Sigmoid colon (tissue), 7 donors: ENCODE measurements at regions of chr9 and their contacts with region 1.

Region 1: DNA sequence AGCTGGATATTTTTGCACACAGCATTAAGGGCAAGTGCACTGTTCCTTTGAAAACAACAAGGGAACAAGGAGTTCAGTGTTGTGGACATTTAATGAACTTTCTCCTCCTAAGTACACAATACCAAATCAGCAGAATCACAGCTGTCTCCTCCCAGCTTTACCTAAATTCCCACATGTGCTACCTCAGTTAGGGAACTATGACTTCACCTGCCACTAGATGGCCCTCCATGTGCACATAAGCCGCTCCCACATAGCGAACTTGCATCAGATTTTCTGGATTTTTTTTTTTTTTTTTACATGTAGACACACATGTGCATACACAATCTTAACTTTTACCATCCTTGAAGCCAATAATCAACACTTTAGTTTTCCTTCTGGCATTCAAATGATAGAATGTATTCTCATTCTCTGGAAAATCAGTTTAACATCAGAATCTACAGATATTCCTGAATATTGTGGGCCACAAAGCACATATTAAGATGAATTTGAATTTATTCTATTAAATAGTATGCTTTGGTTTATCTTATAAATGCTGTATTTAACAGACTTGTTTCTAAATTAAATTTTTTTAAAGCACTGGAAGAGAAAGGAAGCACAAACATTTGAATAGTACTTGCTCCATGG is 123.6 kb downstream of the PALM2AKAP2 start:
- DNase-seq: peak; percentile 77
- H3K4me3 ChIP-seq: no peak overlapping the region
- H3K27ac ChIP-seq: no peak overlapping the region
- H3K4me1 ChIP-seq: no peaks in the 10 kb centered on the region
- H3K27me3 ChIP-seq: no peaks in the 10 kb centered on the region
- CTCF ChIP-seq: peak; percentile 74 to 85 (median 83)
- EP300 ChIP-seq: no peak
- POLR2A ChIP-seq: no peak

Region 2: DNA sequence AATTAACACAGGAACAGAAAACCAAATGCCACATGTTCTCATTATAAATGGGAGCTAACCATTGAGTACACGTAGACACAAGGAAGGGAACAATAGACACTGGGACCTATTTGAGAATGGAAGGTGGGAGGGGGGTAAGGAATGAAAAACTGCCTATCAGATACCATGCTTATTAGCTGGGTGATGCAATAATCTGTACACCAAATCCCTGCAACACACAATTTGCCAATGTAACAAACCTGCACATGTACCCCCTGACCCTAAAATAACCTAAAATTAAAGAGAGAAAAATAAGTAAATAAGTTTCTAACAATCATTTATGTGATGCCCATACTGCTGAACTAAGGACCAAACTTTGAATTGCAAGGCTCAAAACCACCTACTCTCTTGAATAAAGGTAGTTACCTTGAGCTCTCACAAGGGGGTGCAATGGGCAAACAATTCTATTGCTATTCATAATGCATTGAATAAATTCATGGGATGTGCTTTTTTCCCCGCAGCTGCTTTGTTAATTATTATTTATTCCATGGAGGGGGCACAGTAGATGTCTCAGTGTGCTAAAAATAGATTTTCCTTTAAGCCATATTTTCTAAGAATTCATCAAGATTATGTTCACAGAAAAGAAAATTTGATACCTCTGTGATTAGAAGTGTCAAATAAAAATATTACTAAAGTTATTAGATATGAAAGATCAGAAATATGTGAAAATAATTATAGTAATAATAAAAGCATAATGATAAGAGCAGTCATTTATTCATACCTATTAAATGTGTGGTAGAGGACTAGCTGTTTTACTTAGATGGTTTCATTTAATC is 329.4 kb before region 1 on chr9:
- intact Hi-C with region 1: no loop called
- DNase-seq: no peak
- H3K4me3 ChIP-seq: no peak overlapping the region
- H3K27ac ChIP-seq: no peak overlapping the region
- H3K4me1 ChIP-seq: no peaks in the 10 kb centered on the region
- H3K27me3 ChIP-seq: no peaks in the 10 kb centered on the region
- CTCF ChIP-seq: peak; percentile 38 to 64 (median 60)
- EP300 ChIP-seq: no peak
- POLR2A ChIP-seq: no peak

Region 3: GRCh38 chr9:109880277-109881169 is 23.1 kb before region 1 on chr9:
- intact Hi-C with region 1: no loop called
- DNase-seq: no peak
- H3K4me3 ChIP-seq: no peak overlapping the region
- H3K27ac ChIP-seq: no peak overlapping the region
- H3K4me1 ChIP-seq: no peaks in the 10 kb centered on the region
- H3K27me3 ChIP-seq: no peaks in the 10 kb centered on the region
- CTCF ChIP-seq: peak in 1 of 4 experiments; percentile 40
- EP300 ChIP-seq: no peak
- POLR2A ChIP-seq: no peak

Region 4: GRCh38 chr9:110058304-110058953 is 154.8 kb after region 1 on chr9:
- intact Hi-C with region 1: loop called (anchors 5 kb)
- DNase-seq: no peak
- H3K4me3 ChIP-seq: no peak overlapping the region
- H3K27ac ChIP-seq: no peak overlapping the region
- H3K4me1 ChIP-seq: peaks cover 0 to 16% (median 9%) of the 10 kb centered on the region in 4 donors
- H3K27me3 ChIP-seq: no peaks in the 10 kb centered on the region
- CTCF ChIP-seq: peak in 3 of 4 experiments; percentile 22 to 41 (median 41)
- EP300 ChIP-seq: no peak
- POLR2A ChIP-seq: no peak

Region 5: DNA sequence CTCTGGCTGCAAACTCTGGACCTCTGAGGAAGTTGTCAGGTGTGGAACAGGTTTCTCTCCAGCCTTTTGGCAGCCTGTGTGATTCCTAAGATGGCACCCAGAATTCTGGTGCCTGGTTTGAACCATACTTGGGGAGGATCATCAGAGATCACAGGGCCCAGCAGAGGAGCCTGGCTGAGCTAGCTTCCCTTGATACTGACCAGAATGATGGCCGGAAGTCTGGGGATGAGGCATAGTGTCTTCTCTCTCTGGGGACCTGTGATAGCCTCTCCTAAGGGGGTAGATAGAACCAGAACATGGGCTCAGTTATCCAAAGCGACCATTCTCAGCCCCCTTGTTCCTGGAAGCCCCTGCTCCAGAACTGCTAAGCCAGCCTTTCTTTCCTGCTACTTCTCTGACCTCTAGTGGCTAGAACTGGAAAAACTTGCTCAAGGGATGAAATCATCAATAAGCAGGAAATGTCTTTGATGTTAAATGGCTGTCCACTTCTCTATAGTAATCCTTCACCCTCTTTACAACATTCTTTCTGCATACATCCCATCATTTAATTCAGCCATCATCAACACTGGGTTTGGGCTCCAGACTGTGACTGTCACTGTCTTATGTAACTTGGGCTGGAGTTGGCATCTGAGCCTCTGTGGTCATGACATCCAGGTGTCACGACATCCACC is 249.2 kb after region 1 on chr9:
- intact Hi-C with region 1: loop called (anchors 1 kb)
- DNase-seq: no peak
- H3K4me3 ChIP-seq: no peak overlapping the region
- H3K27ac ChIP-seq: peak overlapping the region in 2 of 4 donors; percentile 27 to 34
- H3K4me1 ChIP-seq: peaks cover 0 to 70% (median 44%) of the 10 kb centered on the region in 4 donors
- H3K27me3 ChIP-seq: no peaks in the 10 kb centered on the region
- CTCF ChIP-seq: peak; percentile 53 to 87 (median 70)
- EP300 ChIP-seq: no peak
- POLR2A ChIP-seq: no peak

Region 6: DNA sequence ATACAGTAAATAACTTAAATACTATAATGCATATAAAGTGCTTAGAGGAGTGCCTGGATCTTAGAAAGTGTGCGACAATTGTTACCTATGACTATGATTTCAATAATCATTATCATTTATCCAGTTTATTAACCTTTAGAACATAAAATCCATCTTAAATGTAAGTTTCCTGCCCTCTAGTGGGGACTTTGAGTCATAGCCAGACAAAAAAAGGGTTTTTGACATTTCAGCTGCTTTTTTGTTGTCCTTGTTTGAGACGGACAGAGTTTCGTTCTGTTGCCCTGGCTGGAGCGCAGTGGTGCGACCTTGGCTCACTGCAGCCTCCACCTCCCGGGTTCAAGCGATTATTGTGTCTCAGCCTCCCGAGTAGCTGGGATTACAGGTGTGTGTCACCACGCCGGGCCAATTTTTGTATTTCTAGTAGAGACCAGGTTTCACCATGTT is 314.1 kb after region 1 on chr9:
- intact Hi-C with region 1: loop called (anchors 2 kb)
- DNase-seq: no peak
- H3K4me3 ChIP-seq: no peak overlapping the region
- H3K27ac ChIP-seq: no peak overlapping the region
- H3K4me1 ChIP-seq: no peaks in the 10 kb centered on the region
- H3K27me3 ChIP-seq: no peaks in the 10 kb centered on the region
- CTCF ChIP-seq: peak; percentile 56 to 84 (median 64)
- EP300 ChIP-seq: no peak
- POLR2A ChIP-seq: no peak

Region 7: DNA sequence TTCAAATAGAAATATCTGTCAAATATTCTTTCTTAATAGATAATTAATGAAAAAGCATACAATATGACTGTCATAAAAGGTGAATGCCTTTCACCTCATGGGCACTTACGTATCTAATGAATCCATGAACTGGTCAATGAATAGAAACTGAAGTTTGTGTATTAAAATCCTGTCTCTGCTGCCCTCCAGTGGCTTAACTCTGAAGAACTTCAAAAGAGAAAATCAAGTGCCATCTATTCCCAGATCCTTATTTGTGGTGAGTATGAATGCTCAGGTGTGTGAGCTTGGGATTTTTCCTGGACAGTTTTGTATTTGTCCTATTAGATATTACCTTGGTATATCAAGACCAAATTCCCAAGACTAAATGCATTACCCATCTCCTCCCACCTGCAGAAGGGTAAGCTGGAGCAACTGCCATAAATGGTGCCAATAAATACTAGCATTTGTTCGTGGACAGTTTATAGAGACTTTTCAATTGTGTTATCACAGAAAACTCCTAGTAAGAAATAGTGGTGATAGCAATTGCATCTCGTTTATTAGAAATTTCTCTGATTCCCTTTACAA is 719.9 kb after region 1 on chr9:
- intact Hi-C with region 1: loop called (anchors 10 kb)
- DNase-seq: no peak
- H3K4me3 ChIP-seq: no peak overlapping the region
- H3K27ac ChIP-seq: no peak overlapping the region
- H3K4me1 ChIP-seq: peaks cover 0 to 9% (median 2%) of the 10 kb centered on the region in 4 donors
- H3K27me3 ChIP-seq: no peaks in the 10 kb centered on the region
- CTCF ChIP-seq: peak in 3 of 4 experiments; percentile 46 to 60 (median 57)
- EP300 ChIP-seq: no peak
- POLR2A ChIP-seq: no peak